Posterior vena cava (tissue), 2 donors: ENCODE measurements at regions of chr4 and their contacts with region 1.

Region 1: GRCh38 chr4:763922-764321 is 58.3 kb downstream of the PCGF3 start:
- DNase-seq: no peak

Region 2: GRCh38 chr4:794900-795725 is 31.2 kb after region 1 on chr4:
- intact Hi-C with region 1: loop called in 1 of 2 experiments (anchors 1 kb)
- DNase-seq: no peak

Region 3: GRCh38 chr4:1072830-1073446 is 309.0 kb after region 1 on chr4:
- intact Hi-C with region 1: no loop called
- DNase-seq: peak; percentile 78